Cardiac septum (tissue), 1 donor: ENCODE measurements at regions of chr22 and their contacts with region 1.

Region 1: GRCh38 chr22:36365020-36365411 is 22.8 kb downstream of the MYH9 start:
- DNase-seq: no peak

Region 2: DNA sequence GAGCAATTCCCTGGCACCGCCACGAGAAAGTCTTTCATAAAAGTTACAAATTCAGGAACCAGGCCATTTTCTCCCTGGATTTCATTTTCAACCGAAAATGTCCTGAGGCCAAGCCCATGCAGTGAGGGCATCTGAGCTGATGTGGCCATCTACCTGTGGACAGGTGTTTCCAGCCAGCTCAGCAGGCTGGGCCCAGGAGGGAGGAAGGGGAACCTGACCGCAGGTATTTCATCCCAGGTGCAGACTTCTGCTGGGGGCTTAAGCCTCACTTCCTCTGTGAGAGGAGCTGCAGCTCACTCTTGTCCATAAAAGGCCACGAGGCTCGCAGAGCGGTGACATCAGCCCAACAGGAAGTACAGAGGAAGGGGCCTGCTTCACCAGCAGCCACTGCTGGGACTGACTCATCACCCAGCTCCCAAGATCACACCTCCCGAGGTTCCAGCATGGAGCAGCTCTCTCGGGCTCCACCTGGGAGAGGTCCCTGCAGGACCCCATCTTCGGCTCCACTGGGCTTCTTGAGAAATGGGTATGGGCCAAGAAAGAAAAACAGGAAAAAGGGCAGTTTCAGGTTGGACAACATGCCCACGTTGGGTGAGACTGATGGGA is 33.6 kb before region 1 on chr22:
- intact Hi-C with region 1: loop called (anchors 5 kb)
- DNase-seq: peak; percentile 97